ENCODE measurements at regions of chr12 and their contacts with region 1.

Region 1: DNA sequence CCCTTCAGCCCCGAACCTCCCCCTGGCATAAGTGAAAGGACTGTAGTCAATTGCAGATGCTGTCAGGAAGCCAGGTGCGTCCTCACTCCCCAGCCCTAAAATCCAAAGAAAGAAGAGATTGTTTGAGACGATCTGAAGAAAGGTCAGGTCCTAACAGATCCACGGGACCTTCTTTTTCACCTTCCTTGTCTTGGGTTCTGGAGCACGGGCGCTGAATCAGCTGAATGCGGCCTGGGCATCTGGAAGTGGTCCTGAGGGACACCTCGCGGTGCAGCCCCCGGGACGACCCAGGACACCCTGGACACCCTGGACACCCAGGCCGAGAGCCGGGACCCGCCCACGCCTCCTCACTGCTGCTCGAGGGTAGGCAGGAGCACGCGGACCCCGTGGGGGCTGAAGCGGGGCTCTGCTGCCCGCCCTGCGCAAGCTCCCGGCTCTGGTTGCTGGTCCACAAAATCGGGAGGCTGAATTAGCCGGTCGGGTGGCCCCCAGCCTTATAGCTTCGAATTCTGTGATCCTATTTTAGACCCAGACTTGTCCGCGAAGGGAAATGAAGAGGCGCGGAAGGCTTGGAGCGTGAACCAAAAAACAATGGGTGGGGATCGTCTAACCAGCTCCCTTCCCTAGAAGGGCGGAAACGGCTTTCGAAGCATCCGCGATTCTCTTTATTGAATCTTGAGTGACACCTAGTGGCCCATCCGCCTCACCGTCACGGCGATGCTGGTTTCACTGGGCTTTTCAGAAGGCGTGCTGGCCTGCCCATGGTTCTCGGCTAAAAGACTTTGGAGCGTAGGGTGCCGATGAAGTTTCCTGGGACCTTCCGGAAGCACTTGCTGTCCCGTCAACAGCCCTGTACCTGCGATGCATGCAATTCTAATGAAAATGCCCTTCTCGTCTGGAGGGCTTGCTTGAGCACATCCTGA is 46.4 kb upstream of the PLXNC1 start:
- DNase-seq: peak; percentile 82 to 89
- H3K4me3 ChIP-seq: peak overlapping the region; percentile 14 to 68 (median 53)
- H3K27ac ChIP-seq: no peak overlapping the region
- H3K4me1 ChIP-seq: peaks cover 0 to 4% (median 1%) of the 10 kb centered on the region in 4 experiments; a peak in 4 of 7 replicates
- H3K27me3 ChIP-seq: peaks cover 0 to 12% (median 8%) of the 10 kb centered on the region in 4 experiments; a peak in 5 of 7 replicates
- CTCF ChIP-seq: peak; percentile 80 to 90 (median 88)
- EP300 ChIP-seq: no peak
- POLR2A ChIP-seq: no peak
- RAD21 ChIP-seq: peak; percentile 91 to 96

Region 2: DNA sequence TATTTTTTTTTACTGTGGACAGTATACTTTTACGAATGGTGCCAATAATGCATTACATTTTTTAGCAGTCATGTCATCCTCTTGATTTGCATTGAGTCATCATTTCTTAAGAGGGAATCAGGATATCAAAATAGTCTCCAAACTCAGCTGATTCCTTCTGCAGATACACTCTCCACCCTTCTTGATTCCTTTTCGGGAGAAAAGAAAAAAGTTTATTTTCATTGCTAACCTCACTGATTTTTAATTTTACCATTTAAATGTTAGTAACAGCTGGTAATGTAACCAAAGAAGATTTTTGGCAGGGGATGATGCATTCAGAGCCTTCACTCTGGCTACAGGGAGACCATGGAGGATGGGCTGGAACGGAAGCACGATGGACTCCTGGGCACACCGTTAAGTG is 587.1 kb before region 1 on chr12:
- CTCF ChIA-PET with region 1: interaction called, 48 read pairs
- POLR2A ChIA-PET with region 1: interaction called, 3 read pairs
- DNase-seq: no peak
- H3K4me3 ChIP-seq: no peak overlapping the region
- H3K27ac ChIP-seq: no peak overlapping the region
- H3K4me1 ChIP-seq: no peaks in the 10 kb centered on the region
- H3K27me3 ChIP-seq: no peaks in the 10 kb centered on the region
- CTCF ChIP-seq: no peak
- EP300 ChIP-seq: no peak
- POLR2A ChIP-seq: no peak
- RAD21 ChIP-seq: no peak

Region 3: GRCh38 chr12:93742110-93742934 is 359.7 kb before region 1 on chr12:
- CTCF ChIA-PET with region 1: interaction called, 11 read pairs
- POLR2A ChIA-PET with region 1: no interaction called
- DNase-seq: peak; percentile 13 to 68
- H3K4me3 ChIP-seq: peak overlapping the region; percentile 36 to 68 (median 56); a peak in 7 of 8 replicates
- H3K27ac ChIP-seq: peak overlapping the region; percentile 87
- H3K4me1 ChIP-seq: peaks cover 0 to 17% (median 12%) of the 10 kb centered on the region in 4 experiments; a peak in 4 of 7 replicates
- H3K27me3 ChIP-seq: no peaks in the 10 kb centered on the region
- CTCF ChIP-seq: peak; percentile 33 to 51 (median 38)
- EP300 ChIP-seq: no peak
- POLR2A ChIP-seq: no peak
- RAD21 ChIP-seq: peak; percentile 45 to 68; a peak in 3 of 4 replicates

Region 4: GRCh38 chr12:93802698-93803423 is 299.1 kb before region 1 on chr12:
- CTCF ChIA-PET with region 1: interaction called, 17 read pairs
- POLR2A ChIA-PET with region 1: no interaction called
- DNase-seq: no peak
- H3K4me3 ChIP-seq: no peak overlapping the region
- H3K27ac ChIP-seq: no peak overlapping the region
- H3K4me1 ChIP-seq: peaks cover 0 to 7% (median 2%) of the 10 kb centered on the region in 4 experiments; a peak in 4 of 7 replicates
- H3K27me3 ChIP-seq: no peaks in the 10 kb centered on the region
- CTCF ChIP-seq: peak in 2 of 3 experiments; percentile 5 to 30; a peak in 2 of 4 replicates
- EP300 ChIP-seq: no peak
- POLR2A ChIP-seq: no peak
- RAD21 ChIP-seq: peak; percentile 53 to 63

Region 5: DNA sequence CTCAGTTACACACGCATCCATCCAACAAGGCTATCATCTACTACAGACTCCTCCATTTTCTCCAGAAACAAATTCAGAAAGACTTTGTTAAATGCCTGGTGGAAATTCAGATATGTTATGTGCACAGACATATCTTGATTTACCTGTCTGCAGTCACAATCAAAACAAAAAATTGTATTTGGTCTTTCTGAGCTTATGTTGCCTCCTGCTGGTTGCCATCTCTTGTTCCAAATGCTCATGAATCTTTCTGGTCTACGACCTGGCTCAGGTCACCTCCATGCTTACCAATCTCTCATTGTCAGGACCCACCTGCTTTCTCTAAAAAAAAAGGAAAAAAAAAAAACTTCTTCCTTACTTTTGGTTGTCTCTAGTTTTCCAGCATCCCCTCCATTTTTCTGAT is 122.8 kb before region 1 on chr12:
- CTCF ChIA-PET with region 1: interaction called, 56 read pairs
- POLR2A ChIA-PET with region 1: no interaction called
- DNase-seq: no peak
- H3K4me3 ChIP-seq: no peak overlapping the region
- H3K27ac ChIP-seq: no peak overlapping the region
- H3K4me1 ChIP-seq: peaks cover 0 to 5% (median 3%) of the 10 kb centered on the region in 4 experiments; a peak in 3 of 7 replicates
- H3K27me3 ChIP-seq: no peaks in the 10 kb centered on the region
- CTCF ChIP-seq: peak in 2 of 3 experiments; percentile 18 to 25; a peak in 2 of 4 replicates
- EP300 ChIP-seq: no peak
- POLR2A ChIP-seq: no peak
- RAD21 ChIP-seq: peak; percentile 61 to 67

Region 6: GRCh38 chr12:94112132-94112531 is 10.1 kb after region 1 on chr12:
- CTCF ChIA-PET with region 1: interaction called, 32 read pairs
- POLR2A ChIA-PET with region 1: no interaction called
- DNase-seq: no peak
- H3K4me3 ChIP-seq: no peak overlapping the region
- H3K27ac ChIP-seq: no peak overlapping the region
- H3K4me1 ChIP-seq: peaks cover 0 to 8% (median 2%) of the 10 kb centered on the region in 4 experiments; a peak in 2 of 7 replicates
- H3K27me3 ChIP-seq: no peaks in the 10 kb centered on the region
- CTCF ChIP-seq: no peak
- EP300 ChIP-seq: no peak
- POLR2A ChIP-seq: no peak
- RAD21 ChIP-seq: no peak

Region 7: DNA sequence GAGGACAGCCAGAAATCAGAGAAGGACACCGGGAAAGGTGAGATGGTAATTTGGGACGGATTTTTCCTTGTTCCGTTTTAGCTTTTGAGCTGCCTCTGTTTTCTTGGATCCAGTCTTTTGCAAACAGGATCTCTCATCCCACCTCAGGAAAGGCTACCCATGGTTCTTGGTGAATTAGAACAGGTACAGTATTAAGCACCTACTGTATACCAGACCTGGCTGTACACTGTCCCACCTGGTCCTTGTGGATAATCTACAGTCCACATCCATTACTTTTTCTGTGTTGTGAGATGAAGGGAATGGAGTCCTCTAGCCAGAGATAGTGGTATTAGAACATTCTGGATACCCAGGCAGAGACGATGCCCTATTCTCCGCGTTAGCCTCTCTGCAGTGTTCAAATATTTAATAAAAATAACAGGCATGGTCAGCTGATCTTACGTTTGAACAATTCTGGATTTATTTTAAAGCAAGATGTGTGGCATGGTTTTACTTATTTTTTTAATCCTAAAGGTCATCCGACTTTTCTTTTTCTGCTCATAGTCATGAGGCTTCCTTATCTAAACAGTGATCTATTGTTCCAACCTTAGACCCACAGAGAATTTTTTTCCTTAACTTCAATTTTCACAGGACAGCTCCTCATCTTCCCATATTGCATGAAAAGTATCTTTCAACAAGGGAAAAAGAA is 65.2 kb after region 1 on chr12:
- CTCF ChIA-PET with region 1: no interaction called
- POLR2A ChIA-PET with region 1: no interaction called
- DNase-seq: no peak
- H3K4me3 ChIP-seq: no peak overlapping the region
- H3K27ac ChIP-seq: no peak overlapping the region
- H3K4me1 ChIP-seq: peaks cover 5 to 18% (median 17%) of the 10 kb centered on the region in 4 experiments; a peak in 6 of 7 replicates
- H3K27me3 ChIP-seq: peaks cover 57 to 94% (median 77%) of the 10 kb centered on the region in 4 experiments
- CTCF ChIP-seq: no peak
- EP300 ChIP-seq: no peak
- POLR2A ChIP-seq: no peak
- RAD21 ChIP-seq: no peak

Region 8: DNA sequence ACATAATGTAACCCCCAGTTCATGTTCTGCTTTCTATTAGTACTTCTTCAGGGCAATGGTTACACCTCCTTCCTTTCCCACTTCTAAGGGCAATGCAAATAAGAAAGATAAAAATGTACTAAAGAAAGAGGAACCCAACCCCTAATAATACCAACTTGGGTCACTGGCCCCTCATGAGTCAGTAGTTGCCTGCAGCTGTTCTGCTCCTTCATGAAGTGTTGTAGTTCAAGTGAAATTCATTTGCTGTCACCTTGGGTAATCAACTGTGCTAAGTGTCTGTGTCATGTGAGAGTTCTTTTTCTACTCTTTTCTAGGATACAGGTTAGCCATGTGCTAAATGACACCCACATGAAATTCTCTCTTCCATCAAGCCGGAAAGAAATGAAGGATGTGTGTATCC is 138.2 kb after region 1 on chr12:
- CTCF ChIA-PET with region 1: no interaction called
- POLR2A ChIA-PET with region 1: no interaction called
- DNase-seq: no peak
- H3K4me3 ChIP-seq: no peak overlapping the region
- H3K27ac ChIP-seq: no peak overlapping the region
- H3K4me1 ChIP-seq: 0 out of 7 replicates have a peak, but pooled peaks cover 0 to 5% (median 0%) of the 10 kb centered on the region in 4 experiments
- H3K27me3 ChIP-seq: no peaks in the 10 kb centered on the region
- CTCF ChIP-seq: no peak
- EP300 ChIP-seq: no peak
- POLR2A ChIP-seq: no peak
- RAD21 ChIP-seq: no peak